ENCODE measurements at regions of chr1 and their contacts with region 1.

Region 1: DNA sequence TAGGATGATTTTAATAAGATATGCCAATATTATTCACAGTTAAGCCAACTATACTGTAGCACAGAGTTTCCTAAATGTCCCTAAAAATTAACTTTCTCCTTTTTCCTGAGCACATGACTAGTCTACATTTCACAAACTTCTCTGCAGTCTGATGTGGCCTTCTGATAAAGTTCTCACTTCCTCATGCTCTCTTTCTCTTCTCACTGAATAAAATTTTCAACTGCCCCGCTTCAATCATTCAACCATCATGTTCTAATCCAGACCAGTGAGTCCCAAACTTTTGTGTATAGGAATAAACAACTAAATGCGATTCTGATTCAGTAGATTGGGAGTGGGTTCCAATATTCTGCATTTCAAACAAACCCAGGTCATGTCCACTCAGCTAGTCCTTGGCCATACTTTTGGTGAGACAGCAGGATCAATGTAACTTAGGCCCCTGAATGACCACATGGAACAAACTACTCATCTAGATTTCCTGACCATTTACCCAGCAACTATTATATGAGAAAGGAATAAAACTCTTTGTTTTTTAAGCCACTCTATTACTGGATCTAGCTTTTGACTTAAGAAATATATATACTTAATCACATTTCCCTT is 20.1 kb downstream of the TUT4 start:
- DNase-seq: no peak
- ATAC-seq: peak; percentile 31; the same call in 2 of the 3 replicates
- H3K4me3 ChIP-seq: peak overlapping the region; percentile 13; the same call in 1 of the 2 replicates
- H3K27ac ChIP-seq: peak overlapping the region; percentile 30
- H3K4me1 ChIP-seq: peaks cover 33% of the 10 kb centered on the region
- H3K27me3 ChIP-seq: no peaks in the 10 kb centered on the region
- CTCF ChIP-seq: no peak
- EP300 ChIP-seq: no peak
- POLR2A ChIP-seq: no peak
- RAD21 ChIP-seq: no peak

Region 2: GRCh38 chr1:52365746-52366516 is 166.9 kb before region 1 on chr1 and contains the start of gene CC2D1B:
- CTCF ChIA-PET with region 1: no interaction called
- POLR2A ChIA-PET with region 1: no interaction called
- RAD21 ChIA-PET with region 1: no interaction called
- SMC1A ChIA-PET with region 1: no interaction called
- in situ Hi-C with region 1: no loop called
- intact Hi-C with region 1: no loop called
- DNase-seq: peak; percentile 94
- ATAC-seq: peak; percentile 97
- H3K4me3 ChIP-seq: peak within 1 kb of the TSS; percentile 88
- H3K27ac ChIP-seq: peak within 1 kb of the TSS; percentile 84
- H3K4me1 ChIP-seq: peaks cover 4% of the 10 kb centered on the region
- H3K27me3 ChIP-seq: no peaks in the 10 kb centered on the region
- CTCF ChIP-seq: no peak; a peak in 1 of 6 replicates
- EP300 ChIP-seq: no peak
- POLR2A ChIP-seq: peak; percentile 99
- RAD21 ChIP-seq: no peak
- polyA plus RNA-seq, gene CC2D1B: 0.90 to 2.2 TPM

Region 3: DNA sequence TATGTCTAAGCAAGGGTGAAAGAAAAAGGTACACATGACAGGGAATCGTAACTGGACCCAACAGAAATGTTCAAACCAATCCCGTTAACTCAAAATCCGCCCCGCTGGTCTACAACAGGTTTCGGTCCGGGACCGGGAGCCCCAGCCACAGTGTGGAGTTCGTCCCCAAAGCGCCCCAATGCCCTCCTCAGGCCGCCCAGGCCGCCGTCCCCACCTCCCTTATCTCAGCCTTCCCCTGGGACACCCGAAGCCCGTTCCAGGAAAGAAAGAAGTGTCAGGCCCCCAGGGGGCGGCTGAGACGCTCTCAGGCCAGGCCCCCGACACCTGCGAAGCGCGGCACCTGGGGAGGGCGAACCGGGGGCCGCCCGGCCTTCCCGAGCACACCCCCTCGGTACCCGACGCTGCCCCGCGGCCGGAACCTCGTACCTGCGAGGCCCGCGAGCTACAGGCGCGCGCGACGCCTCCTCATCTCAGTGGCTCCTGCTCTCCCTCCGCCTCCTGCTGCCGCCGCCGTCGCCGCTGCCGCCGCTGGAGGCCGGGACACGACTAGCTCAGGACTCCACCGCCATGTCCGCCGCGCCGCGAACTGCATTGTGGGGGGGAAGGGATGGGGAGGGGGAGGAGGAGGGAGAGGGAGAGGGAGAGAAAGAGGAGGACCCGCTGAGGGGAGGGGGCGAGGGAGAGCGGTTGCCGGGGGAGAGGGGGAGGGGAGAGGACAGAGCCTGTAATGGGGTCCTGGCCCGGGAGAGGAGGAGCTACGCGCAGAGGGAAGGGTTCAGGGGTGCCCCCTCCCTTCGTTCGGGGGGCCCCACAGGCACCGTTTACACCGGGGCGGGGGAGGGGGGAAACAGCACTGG is 19.9 kb after region 1 on chr1 and contains the start of gene TUT4:
- CTCF ChIA-PET with region 1: interaction called, 3 read pairs
- POLR2A ChIA-PET with region 1: interaction called, 7 read pairs
- RAD21 ChIA-PET with region 1: interaction called, 19 read pairs
- SMC1A ChIA-PET with region 1: interaction called, 11 read pairs
- in situ Hi-C with region 1: no loop called
- intact Hi-C with region 1: no loop called
- DNase-seq: no peak
- ATAC-seq: peak; percentile 78
- H3K4me3 ChIP-seq: peak within 1 kb of the TSS; percentile 81
- H3K27ac ChIP-seq: peak within 1 kb of the TSS; percentile 86
- H3K4me1 ChIP-seq: peaks cover 4% of the 10 kb centered on the region
- H3K27me3 ChIP-seq: 0 out of 4 replicates have a peak, but pooled peaks cover 0 to 6% of the 10 kb centered on the region in 2 experiments
- CTCF ChIP-seq: peak in 1 of 3 experiments; percentile 8; a peak in 2 of 6 replicates
- EP300 ChIP-seq: no peak
- POLR2A ChIP-seq: peak; percentile 82
- RAD21 ChIP-seq: peak; percentile 30; the same call in 1 of the 2 replicates
- polyA plus RNA-seq, gene TUT4: 9.4 to 11.5 TPM

Region 4: DNA sequence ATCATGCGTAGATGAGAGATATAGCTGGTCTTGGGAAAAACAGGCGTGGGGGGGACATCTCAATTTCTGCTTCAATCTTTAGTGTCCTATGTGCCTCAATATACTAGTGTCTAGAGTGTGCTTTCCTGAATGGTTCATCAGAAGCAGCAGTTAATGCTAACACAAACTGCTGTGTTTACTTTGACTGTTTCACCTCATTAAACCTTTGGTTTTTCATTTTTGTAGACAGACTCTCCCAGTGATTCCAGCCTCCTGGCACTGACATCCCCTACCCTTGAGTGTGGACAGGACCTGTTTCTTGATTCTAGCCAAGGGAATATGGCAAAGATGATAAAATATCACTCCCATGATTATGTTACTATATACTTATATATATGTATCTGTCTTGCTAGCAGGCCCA is 347.4 kb after region 1 on chr1:
- CTCF ChIA-PET with region 1: no interaction called
- POLR2A ChIA-PET with region 1: no interaction called
- RAD21 ChIA-PET with region 1: no interaction called
- SMC1A ChIA-PET with region 1: no interaction called
- in situ Hi-C with region 1: no loop called
- intact Hi-C with region 1: no loop called
- DNase-seq: no peak
- ATAC-seq: no peak
- H3K4me3 ChIP-seq: no peak overlapping the region
- H3K27ac ChIP-seq: no peak overlapping the region
- H3K4me1 ChIP-seq: no peaks in the 10 kb centered on the region
- H3K27me3 ChIP-seq: no peaks in the 10 kb centered on the region
- CTCF ChIP-seq: no peak
- EP300 ChIP-seq: no peak
- POLR2A ChIP-seq: no peak
- RAD21 ChIP-seq: no peak

Measured in GM12878 (cell line).